Activated CD4-positive, alpha-beta T cell treated with anti-CD3 and anti-CD28 coated beads for 36 hours (primary cell): ENCODE measurements at regions of chr3 and their contacts with region 1.

Region 1: GRCh38 chr3:33030802-33031201 is 66.1 kb downstream of the GLB1 start:
- DNase-seq: peak; percentile 73
- ATAC-seq: peak; percentile 91
- H3K4me3 Mint-ChIP-seq: no peak overlapping the region
- H3K27ac Mint-ChIP-seq: peak overlapping the region; percentile 51
- H3K4me1 Mint-ChIP-seq: peaks cover 31% of the 10 kb centered on the region
- H3K27me3 Mint-ChIP-seq: no peaks in the 10 kb centered on the region

Region 2: DNA sequence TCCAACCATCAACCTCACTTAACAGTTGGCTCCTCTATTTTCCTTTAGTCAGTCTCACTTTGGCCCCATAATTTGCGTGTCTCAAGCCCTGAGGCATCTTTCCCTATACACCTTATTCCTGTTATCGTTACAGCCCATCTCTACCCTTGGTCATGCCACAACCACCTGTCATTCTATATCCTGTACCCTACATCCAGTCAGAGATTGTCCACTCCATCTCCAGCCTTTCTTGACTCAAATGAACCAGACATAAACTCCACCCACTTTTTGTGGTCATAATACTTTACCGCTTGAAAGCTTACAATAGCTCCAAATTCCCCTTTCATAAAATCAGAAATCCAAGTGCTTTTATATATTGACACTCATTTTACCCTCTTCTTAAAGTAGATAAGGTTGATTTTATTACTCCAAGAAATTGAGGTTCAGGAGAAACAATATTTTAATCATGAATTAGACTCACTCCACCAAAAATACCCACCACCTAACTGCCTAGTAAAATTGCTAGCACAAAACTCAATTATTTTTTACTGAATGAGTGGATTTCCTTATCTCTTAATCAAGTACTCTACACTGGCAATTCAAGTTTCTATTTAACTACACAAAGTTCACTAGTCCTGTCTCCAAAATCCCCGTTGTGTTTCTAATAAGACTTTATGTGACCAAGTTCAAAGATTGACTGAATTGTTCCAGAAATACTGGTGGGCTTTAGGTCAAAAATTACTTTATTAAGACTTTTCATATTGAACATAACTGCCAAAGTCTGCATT is 70.2 kb before region 1 on chr3:
- CTCF ChIA-PET with region 1: interaction called, 5 read pairs
- POLR2A ChIA-PET with region 1: no interaction called
- intact Hi-C with region 1: loop called (anchors 2 kb)
- DNase-seq: no peak
- ATAC-seq: peak; percentile 61
- H3K4me3 Mint-ChIP-seq: peak overlapping the region; percentile 8
- H3K27ac Mint-ChIP-seq: peak overlapping the region; percentile 97
- H3K4me1 Mint-ChIP-seq: peaks cover 77% of the 10 kb centered on the region
- H3K27me3 Mint-ChIP-seq: no peaks in the 10 kb centered on the region

Region 3: DNA sequence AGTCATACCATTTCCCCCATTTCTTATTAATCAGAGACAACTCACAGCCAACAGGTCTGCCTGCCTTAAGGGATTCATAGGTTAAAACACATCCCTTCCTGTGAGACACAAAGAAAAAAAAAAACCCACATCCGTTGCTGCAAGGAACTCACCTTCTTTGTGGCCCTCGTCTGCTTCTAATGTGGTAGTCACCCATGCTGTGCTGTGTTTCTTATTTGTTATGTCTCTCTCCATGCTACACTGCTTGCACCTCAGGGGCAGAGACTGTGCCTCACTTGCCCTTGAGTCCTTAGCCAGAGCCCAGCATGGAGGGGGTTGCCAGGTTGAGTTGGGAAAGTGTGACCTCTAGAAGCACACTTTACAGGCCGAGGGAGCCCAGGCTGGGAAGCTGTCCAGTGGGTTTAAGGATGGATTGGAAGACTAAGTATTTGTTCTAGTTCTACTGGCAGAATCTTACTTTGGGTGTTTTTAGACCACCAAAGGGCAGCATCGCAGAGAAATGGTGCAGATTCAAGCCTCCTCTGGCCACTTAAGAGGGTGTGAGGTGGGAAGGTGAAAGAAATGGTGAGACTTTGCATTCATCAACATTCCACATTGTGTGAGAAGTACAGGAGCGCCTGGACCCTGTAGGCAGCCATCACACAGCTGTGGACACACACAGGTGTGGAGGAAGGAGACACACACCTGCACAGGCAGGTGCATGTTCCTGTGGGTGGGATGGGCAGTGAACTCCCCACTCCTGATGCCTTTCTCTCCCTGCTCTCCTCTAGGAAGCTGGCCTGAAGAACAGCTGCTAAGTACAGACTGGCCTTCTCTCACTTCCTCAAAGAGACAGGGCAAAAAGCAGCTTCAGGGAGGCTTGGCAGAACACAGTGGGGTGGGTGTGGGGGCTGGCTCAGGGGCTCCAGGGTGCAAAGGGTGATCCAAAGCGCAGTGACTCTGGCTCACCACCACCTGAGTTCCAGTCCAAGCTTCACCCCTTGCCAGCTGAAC is 17.3 kb after region 1 on chr3:
- CTCF ChIA-PET with region 1: interaction called, 22 read pairs
- POLR2A ChIA-PET with region 1: interaction called, 6 read pairs
- intact Hi-C with region 1: loop called (anchors 1 kb)
- DNase-seq: peak; percentile 65
- ATAC-seq: peak; percentile 84
- H3K4me3 Mint-ChIP-seq: peak overlapping the region; percentile 29
- H3K27ac Mint-ChIP-seq: peak overlapping the region; percentile 94
- H3K4me1 Mint-ChIP-seq: peaks cover 74% of the 10 kb centered on the region
- H3K27me3 Mint-ChIP-seq: no peaks in the 10 kb centered on the region

Region 4: GRCh38 chr3:33218446-33219174 is 187.8 kb after region 1 on chr3 and contains the start of gene SUSD5:
- CTCF ChIA-PET with region 1: no interaction called
- POLR2A ChIA-PET with region 1: no interaction called
- intact Hi-C with region 1: no loop called
- DNase-seq: peak; percentile 18
- ATAC-seq: no peak
- H3K4me3 Mint-ChIP-seq: no peak within 1 kb of the TSS
- H3K27ac Mint-ChIP-seq: no peak within 1 kb of the TSS
- H3K4me1 Mint-ChIP-seq: peaks cover 5% of the 10 kb centered on the region
- H3K27me3 Mint-ChIP-seq: peaks cover 48% of the 10 kb centered on the region
- total RNA-seq, gene SUSD5: not detected